ENCODE measurements at regions of chr19 and their contacts with region 1.

Region 1: GRCh38 chr19:531009-531752 is 379 bp upstream of the CDC34 start:
- DNase-seq: peak; percentile 47 to 76
- ATAC-seq: peak; percentile 75
- H3K4me3 ChIP-seq: peak overlapping the region; percentile 53 to 100 (median 91)
- H3K27ac ChIP-seq: peak overlapping the region; percentile 97 to 99 (median 98)
- H3K4me1 ChIP-seq: peaks cover 31 to 32% of the 10 kb centered on the region in 2 donors
- H3K27me3 ChIP-seq: peaks cover 7 to 11% (median 8%) of the 10 kb centered on the region in 3 donors
- CTCF ChIP-seq: peak in 2 of 5 experiments; percentile 3 to 31
- POLR2A ChIP-seq: no peak

Region 2: DNA sequence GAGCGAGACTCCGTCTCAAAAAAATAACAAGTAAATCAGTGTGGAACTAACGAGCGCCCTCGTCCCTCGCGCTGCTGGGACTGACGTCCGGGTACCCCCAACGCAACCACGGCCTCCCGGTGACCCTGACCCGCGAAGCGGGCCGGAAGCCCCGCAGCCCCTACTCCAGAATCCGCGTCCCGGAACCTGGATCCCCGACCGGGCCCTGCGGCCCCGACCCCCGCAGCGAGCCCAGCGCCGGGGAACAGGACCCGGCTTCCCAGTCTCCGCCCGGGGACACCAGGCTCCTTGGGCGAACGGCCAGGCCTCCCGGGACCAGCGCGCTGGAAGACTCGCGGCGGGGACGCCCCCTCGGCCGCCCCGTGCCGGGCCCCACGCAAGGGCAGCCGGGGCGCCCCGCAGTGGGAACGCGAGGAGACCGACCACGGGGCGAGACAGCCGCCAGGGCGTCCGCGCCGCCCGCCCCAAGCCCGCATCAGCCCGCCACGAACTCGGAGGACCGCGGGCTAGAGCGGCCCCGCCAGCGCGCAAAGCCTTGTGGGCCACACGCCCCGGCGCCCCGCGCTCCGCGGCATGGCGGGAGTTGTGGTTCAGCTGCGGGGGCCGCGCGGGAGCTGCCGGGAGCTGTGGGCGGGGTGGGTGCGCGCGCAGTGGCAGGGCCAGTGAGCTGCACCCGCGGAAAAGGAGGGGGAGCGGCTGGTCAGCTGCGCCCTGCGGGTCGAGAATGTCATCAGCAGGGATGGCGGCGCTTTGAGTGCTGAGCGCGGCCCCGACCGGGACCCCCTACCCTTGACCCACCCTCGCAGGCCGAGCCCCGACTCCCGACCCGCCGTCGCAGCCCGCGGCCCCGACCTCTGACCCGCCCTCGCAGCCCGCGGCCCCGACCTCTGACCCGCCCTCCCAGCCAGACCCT is 42.4 kb before region 1 on chr19:
- in situ Hi-C with region 1: no loop called
- intact Hi-C with region 1: loop called (anchors 1 kb)
- DNase-seq: peak; percentile 87 to 95
- ATAC-seq: peak; percentile 92
- H3K4me3 ChIP-seq: peak overlapping the region; percentile 76 to 93 (median 84)
- H3K27ac ChIP-seq: peak overlapping the region; percentile 79 to 94 (median 92)
- H3K4me1 ChIP-seq: peaks cover 6 to 7% of the 10 kb centered on the region in 2 donors
- H3K27me3 ChIP-seq: peaks cover 10 to 21% (median 14%) of the 10 kb centered on the region in 3 donors
- CTCF ChIP-seq: peak in 1 of 5 experiments; percentile 31
- POLR2A ChIP-seq: peak; percentile 69 to 83

Region 3: DNA sequence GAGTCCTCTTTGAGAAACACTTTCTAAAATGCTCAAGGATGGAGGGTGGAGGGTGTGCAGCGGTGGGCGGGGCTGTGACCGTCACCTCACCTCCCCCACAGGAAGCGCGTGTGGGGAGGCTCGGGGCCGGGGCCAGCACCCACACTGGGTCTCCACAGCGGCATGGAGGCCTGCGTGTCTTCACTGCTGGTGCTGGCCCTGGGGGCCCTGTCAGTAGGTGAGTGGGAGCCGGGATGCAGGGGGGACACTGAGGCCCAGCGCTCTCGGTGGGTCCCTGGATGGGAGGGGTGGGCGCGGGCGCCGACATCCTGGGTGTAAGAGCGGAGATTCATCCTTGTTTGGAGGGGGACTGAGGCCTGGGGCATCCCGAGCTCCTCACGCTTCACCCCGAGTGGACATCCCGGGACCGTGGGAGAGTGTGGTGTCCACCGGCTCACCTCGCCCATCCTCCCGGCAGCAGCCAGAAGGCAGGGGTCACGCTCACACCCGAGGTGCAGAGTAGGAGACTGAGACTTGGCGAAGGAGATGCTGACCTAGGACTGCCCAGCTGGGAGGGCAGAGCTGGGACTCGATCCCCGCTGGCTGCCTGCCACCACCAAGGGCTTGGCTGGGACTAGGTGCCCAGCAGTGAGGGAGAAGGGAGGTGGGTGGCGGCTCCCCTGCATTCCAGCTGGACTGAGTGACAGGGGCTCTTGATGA is 12.9 kb after region 1 on chr19 and contains the start of gene GZMM:
- in situ Hi-C with region 1: no loop called
- intact Hi-C with region 1: no loop called
- DNase-seq: no peak
- ATAC-seq: no peak
- H3K4me3 ChIP-seq: no peak within 1 kb of the TSS
- H3K27ac ChIP-seq: no peak within 1 kb of the TSS
- H3K4me1 ChIP-seq: no peaks in the 10 kb centered on the region
- H3K27me3 ChIP-seq: peaks cover 0 to 5% (median 0%) of the 10 kb centered on the region in 3 donors
- CTCF ChIP-seq: no peak
- POLR2A ChIP-seq: no peak
- total RNA-seq, gene GZMM: 0.49 TPM in 1 of 4 donors, not detected in the others

Region 4: GRCh38 chr19:604355-604754 is 73.2 kb after region 1 on chr19:
- in situ Hi-C with region 1: no loop called
- intact Hi-C with region 1: no loop called
- DNase-seq: no peak
- ATAC-seq: no peak
- H3K4me3 ChIP-seq: no peak overlapping the region
- H3K27ac ChIP-seq: no peak overlapping the region
- H3K4me1 ChIP-seq: no peaks in the 10 kb centered on the region
- H3K27me3 ChIP-seq: peaks cover 2 to 8% (median 3%) of the 10 kb centered on the region in 3 donors
- CTCF ChIP-seq: no peak
- POLR2A ChIP-seq: no peak